ENCODE measurements at regions of chr1 and their contacts with region 1.

Region 1: DNA sequence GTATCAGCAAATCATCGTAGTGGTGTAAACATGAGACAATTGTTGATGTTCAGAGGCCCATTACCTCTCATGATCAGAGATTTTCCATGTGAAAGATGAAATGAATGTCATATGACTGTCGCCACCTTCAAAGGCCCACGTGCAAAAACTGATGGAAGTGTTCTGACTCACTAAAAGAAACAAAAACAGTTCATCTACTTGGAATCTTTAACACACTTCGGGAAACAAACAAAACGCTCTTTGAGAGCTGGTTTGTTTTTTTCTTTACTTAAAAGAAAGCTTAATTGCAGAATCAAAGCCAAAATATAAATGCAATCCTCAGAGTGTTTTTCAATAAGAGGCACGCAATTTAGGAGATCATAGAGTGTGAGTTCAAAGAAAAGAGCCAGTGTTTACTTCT is 100.8 kb downstream of the PLPPR4 start:
- DNase-seq: no peak
- ATAC-seq: no peak
- H3K4me3 ChIP-seq: no peak overlapping the region
- H3K4me3 Mint-ChIP-seq: no peak overlapping the region
- H3K27ac ChIP-seq: no peak overlapping the region
- H3K27ac Mint-ChIP-seq: no peak overlapping the region
- H3K4me1 ChIP-seq: no peaks in the 10 kb centered on the region
- H3K4me1 Mint-ChIP-seq: no peaks in the 10 kb centered on the region
- H3K27me3 ChIP-seq: no peaks in the 10 kb centered on the region
- H3K27me3 Mint-ChIP-seq: no peaks in the 10 kb centered on the region
- CTCF ChIP-seq: no peak

Region 2: DNA sequence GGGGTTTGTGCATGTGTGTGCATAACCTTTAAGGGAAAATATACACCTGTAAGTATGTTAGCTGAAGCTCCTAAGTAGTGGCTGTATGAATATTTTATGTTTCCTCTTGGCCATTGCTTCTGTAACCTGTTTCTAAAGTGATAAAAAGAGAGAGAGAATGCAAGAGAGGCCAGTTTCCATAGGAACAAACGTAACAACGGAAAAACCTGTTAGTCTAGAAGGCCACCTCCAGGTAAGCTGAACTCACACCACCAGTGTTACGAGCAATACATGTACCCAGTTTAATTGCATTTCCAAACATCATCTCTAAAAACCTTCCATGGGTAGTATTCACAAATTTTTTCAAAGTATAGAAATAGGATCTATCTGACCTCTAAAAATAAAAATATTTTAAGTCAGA is 37.8 kb before region 1 on chr1:
- CTCF ChIA-PET with region 1: no interaction called
- POLR2A ChIA-PET with region 1: no interaction called
- intact Hi-C with region 1: no loop called
- DNase-seq: no peak
- ATAC-seq: no peak
- H3K4me3 ChIP-seq: no peak overlapping the region
- H3K4me3 Mint-ChIP-seq: no peak overlapping the region
- H3K27ac ChIP-seq: no peak overlapping the region
- H3K27ac Mint-ChIP-seq: no peak overlapping the region
- H3K4me1 ChIP-seq: no peaks in the 10 kb centered on the region
- H3K4me1 Mint-ChIP-seq: no peaks in the 10 kb centered on the region
- H3K27me3 ChIP-seq: no peaks in the 10 kb centered on the region
- H3K27me3 Mint-ChIP-seq: peaks cover 3% of the 10 kb centered on the region
- CTCF ChIP-seq: no peak

Region 3: DNA sequence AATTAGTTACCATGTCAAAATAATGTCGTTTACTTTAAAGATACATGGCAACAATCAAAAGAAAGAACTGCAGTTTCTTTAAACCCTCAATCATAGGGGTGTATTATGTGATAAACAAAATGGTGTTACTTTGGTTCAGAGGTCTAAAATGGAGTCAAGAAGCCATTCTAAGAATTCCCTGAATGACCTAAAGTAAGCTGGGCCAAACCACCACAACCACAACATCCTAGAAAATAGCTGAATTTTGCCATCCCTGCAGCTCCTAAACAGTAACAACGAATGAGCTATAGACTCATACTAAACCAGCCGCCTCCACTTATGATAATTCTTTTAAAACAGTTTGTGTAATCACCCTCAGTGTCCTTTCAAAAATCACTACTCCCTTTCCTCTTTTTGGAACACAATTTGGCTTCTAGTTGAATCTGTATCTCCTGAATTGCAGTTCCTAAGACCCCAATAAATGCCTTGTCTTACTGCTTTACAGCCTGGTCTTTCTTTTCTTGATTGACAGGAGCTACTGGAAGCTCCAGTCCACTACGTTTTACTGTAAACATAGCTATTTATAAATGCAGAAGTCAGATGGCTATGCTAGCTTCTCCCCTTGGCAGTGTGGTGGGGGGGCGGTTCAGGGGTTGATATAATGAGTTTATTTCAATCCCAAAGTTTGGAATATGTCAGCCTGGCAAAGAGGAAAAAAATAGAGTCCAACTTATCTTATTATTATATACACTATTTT is 16.6 kb before region 1 on chr1:
- CTCF ChIA-PET with region 1: no interaction called
- POLR2A ChIA-PET with region 1: no interaction called
- intact Hi-C with region 1: loop called in 1 of 2 experiments (anchors 1 kb)
- DNase-seq: no peak
- ATAC-seq: no peak
- H3K4me3 ChIP-seq: no peak overlapping the region
- H3K4me3 Mint-ChIP-seq: no peak overlapping the region
- H3K27ac ChIP-seq: no peak overlapping the region
- H3K27ac Mint-ChIP-seq: no peak overlapping the region
- H3K4me1 ChIP-seq: no peaks in the 10 kb centered on the region
- H3K4me1 Mint-ChIP-seq: no peaks in the 10 kb centered on the region
- H3K27me3 ChIP-seq: no peaks in the 10 kb centered on the region
- H3K27me3 Mint-ChIP-seq: no peaks in the 10 kb centered on the region
- CTCF ChIP-seq: no peak